ENCODE measurements at regions of chr3 and their contacts with region 1.

Region 1: GRCh38 chr3:142595951-142596725 is at the start of gene PLS1:
- DNase-seq: peak; percentile 59 to 82
- ATAC-seq: peak; percentile 95 to 98
- H3K4me3 ChIP-seq: peak within 1 kb of the TSS; percentile 73 to 78 (median 76)
- H3K27ac ChIP-seq: peak within 1 kb of the TSS; percentile 52 to 67 (median 61)
- H3K4me1 ChIP-seq: peaks cover 0 to 4% of the 10 kb centered on the region in 2 donors
- H3K27me3 ChIP-seq: no peaks in the 10 kb centered on the region
- CTCF ChIP-seq: peak in 1 of 5 experiments; percentile 24
- POLR2A ChIP-seq: peak; percentile 24 to 26
- total RNA-seq, gene PLS1: 0.65 to 5.4 (median 0.94) TPM

Region 2: GRCh38 chr3:142578327-142579223 is 17.6 kb before region 1 on chr3 and contains the start of gene ATR:
- in situ Hi-C with region 1: no loop called
- intact Hi-C with region 1: loop called (anchors 1 kb)
- DNase-seq: peak; percentile 95 to 96
- ATAC-seq: peak; percentile 98 to 99
- H3K4me3 ChIP-seq: peak within 1 kb of the TSS; percentile 76 to 98 (median 86)
- H3K27ac ChIP-seq: peak within 1 kb of the TSS; percentile 86 to 91 (median 88)
- H3K4me1 ChIP-seq: peaks cover 14 to 19% of the 10 kb centered on the region in 2 donors
- H3K27me3 ChIP-seq: no peaks in the 10 kb centered on the region
- CTCF ChIP-seq: peak in 2 of 5 experiments; percentile 14 to 19
- POLR2A ChIP-seq: peak; percentile 45 to 70
- total RNA-seq, gene ATR: 8.9 to 21.9 (median 10.0) TPM

Region 3: GRCh38 chr3:142723968-142724681 is 128.0 kb after region 1 on chr3 and contains the start of gene TRPC1:
- in situ Hi-C with region 1: no loop called
- intact Hi-C with region 1: loop called (anchors 5 kb)
- DNase-seq: peak; percentile 45 to 51
- ATAC-seq: peak; percentile 92 to 96
- H3K4me3 ChIP-seq: peak within 1 kb of the TSS; percentile 66 to 71 (median 68)
- H3K27ac ChIP-seq: peak within 1 kb of the TSS; percentile 57 to 82 (median 76)
- H3K4me1 ChIP-seq: peaks cover 2 to 6% of the 10 kb centered on the region in 2 donors
- H3K27me3 ChIP-seq: peaks cover 0 to 24% (median 7%) of the 10 kb centered on the region in 3 donors
- CTCF ChIP-seq: no peak
- POLR2A ChIP-seq: peak; percentile 55 to 71
- total RNA-seq, gene TRPC1: 0.75 to 1.7 (median 1.1) TPM

Region 4: DNA sequence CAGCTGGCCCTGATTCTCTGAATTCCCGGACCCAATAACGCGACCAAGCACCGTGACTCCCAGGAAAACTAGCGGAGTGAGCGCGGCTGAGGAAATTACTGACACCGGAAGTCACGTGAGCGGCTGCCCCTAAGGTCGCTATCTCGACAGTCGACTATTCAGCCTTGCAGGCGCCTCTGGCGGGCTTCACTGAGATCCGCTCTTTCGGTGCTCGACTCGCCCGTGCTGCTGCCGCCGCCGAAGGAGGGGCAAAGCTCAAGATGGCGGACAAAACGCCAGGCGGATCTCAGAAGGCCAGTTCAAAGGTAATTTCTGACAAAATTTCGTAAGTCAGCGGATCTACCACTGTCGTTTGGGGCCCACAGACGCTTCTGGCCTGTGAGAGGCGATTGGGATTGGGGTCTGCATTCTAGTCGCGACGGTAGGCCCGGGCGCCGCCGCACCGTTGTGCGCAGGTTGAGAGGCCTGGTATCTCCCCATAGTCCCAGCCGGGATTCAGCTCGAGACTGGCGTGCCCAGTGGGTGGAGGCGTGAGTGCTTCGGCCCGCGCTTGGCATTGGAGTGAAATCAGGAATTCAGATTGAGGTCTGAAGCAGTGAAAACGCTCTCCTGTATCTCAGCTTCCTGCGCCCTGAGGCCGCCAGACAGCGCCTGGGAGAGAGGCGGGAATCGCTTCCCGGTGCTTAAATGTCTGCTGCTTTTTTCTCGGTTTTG is 405.4 kb after region 1 on chr3 and contains the start of gene U2SURP:
- in situ Hi-C with region 1: loop called in 3 of 4 experiments (anchors 10 to 25 kb)
- intact Hi-C with region 1: no loop called
- DNase-seq: peak; percentile 95 to 96
- ATAC-seq: peak; percentile 92 to 94
- H3K4me3 ChIP-seq: peak within 1 kb of the TSS; percentile 65 to 95 (median 87)
- H3K27ac ChIP-seq: peak within 1 kb of the TSS; percentile 92 to 95 (median 94)
- H3K4me1 ChIP-seq: peaks cover 49 to 53% of the 10 kb centered on the region in 2 donors
- H3K27me3 ChIP-seq: no peaks in the 10 kb centered on the region
- CTCF ChIP-seq: peak in 1 of 5 experiments; percentile 26
- POLR2A ChIP-seq: peak; percentile 80 to 82
- total RNA-seq, gene U2SURP: 43.2 to 63.7 (median 43.9) TPM

Measured in gastrocnemius medialis (tissue), 4 donors.